OCI-LY7 (cell line): ENCODE measurements at regions of chrX and their contacts with region 1.

Region 1: GRCh38 chrX:46446727-46447378 is 98.4 kb downstream of the ZNF674 start:
- DNase-seq: peak; percentile 89
- H3K4me3 ChIP-seq: peak overlapping the region; percentile 93
- H3K27ac ChIP-seq: no peak overlapping the region
- H3K4me1 ChIP-seq: peaks cover 10% of the 10 kb centered on the region
- CTCF ChIP-seq: no peak

Region 2: GRCh38 chrX:45172890-45173289 is 1274.0 kb before region 1 on chrX:
- CTCF ChIA-PET with region 1: no interaction called
- POLR2A ChIA-PET with region 1: interaction called, 11 read pairs
- intact Hi-C with region 1: no loop called
- DNase-seq: no peak
- H3K4me3 ChIP-seq: no peak overlapping the region
- H3K27ac ChIP-seq: no peak overlapping the region
- H3K4me1 ChIP-seq: no peaks in the 10 kb centered on the region
- CTCF ChIP-seq: no peak